ENCODE measurements at regions of chr1 and their contacts with region 1.

Region 1: GRCh38 chr1:210448297-210448892 is 119.7 kb downstream of the HHAT start:
- DNase-seq: peak; percentile 49
- ATAC-seq: no peak
- H3K4me3 Mint-ChIP-seq: no peak overlapping the region
- H3K27ac Mint-ChIP-seq: no peak overlapping the region
- H3K4me1 Mint-ChIP-seq: peaks cover 28% of the 10 kb centered on the region
- H3K27me3 Mint-ChIP-seq: peaks cover 2% of the 10 kb centered on the region

Region 2: GRCh38 chr1:210200124-210200736 is 248.2 kb before region 1 on chr1:
- CTCF ChIA-PET with region 1: no interaction called
- POLR2A ChIA-PET with region 1: no interaction called
- intact Hi-C with region 1: no loop called
- DNase-seq: no peak
- ATAC-seq: no peak
- H3K4me3 Mint-ChIP-seq: no peak overlapping the region
- H3K27ac Mint-ChIP-seq: no peak overlapping the region
- H3K4me1 Mint-ChIP-seq: no peaks in the 10 kb centered on the region
- H3K27me3 Mint-ChIP-seq: peaks cover 7% of the 10 kb centered on the region

Region 3: DNA sequence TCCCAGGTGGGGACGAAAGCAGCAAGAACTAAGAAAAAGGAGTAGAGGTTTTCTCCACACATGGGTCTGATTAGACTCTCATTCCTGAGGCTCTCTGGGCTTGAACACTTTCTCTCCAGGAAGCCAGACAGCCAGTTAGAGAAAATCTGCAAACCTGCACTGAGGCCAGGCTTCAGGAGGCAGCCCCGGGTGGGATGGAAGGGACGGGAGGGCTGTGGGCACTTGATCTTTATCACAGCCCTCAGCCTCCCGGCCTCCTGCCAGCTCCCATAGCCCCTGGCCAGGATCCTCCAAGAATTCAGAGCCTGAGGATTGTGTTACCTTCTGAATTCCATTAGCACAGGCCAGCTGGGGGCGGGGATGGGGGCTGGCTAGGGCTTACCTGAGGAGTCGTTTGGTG is 175.7 kb before region 1 on chr1:
- CTCF ChIA-PET with region 1: no interaction called
- POLR2A ChIA-PET with region 1: no interaction called
- intact Hi-C with region 1: no loop called
- DNase-seq: no peak
- ATAC-seq: no peak
- H3K4me3 Mint-ChIP-seq: no peak overlapping the region
- H3K27ac Mint-ChIP-seq: no peak overlapping the region
- H3K4me1 Mint-ChIP-seq: no peaks in the 10 kb centered on the region
- H3K27me3 Mint-ChIP-seq: peaks cover 15% of the 10 kb centered on the region

Region 4: DNA sequence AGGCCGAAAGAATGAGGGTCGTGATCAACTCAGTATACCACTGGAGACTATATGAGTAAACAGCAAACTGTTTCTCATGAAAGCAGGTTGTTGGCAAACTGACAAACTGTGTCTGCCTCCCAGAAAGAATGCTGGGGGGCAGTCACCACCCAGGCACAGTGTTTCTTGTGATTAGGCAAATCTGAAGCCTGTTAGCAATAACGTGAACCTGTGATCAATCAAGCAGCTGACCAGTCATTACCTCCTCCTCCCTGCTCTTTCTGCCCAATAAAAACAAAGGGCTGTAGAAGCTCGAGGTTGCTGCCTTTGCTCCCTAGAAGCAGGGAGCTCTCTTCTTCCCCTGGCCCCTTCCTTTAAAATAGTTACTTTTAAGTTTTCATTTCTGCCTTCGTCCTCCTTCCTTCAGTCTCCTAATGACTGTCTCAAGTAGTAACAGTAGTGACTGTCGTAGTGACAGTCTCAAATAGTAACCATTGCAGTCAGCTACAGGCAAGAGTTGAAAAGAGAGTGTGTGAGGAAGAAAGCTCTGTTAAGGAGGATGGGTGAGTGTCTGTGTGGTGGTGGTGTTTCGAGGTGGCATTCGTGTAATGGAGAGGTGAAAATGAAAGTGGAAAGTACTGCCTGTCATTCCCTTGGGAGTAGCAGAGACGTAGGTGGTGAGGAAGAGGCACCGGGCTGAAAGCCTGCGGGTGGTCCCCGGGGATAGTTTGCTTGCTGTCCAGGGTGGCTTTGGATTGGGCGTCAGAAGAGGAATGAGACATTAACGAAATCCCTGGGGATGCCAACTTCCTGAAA is 105.2 kb before region 1 on chr1:
- CTCF ChIA-PET with region 1: interaction called, 3 read pairs
- POLR2A ChIA-PET with region 1: no interaction called
- intact Hi-C with region 1: loop called in 1 of 2 experiments (anchors 1 kb)
- DNase-seq: no peak
- ATAC-seq: peak; percentile 50
- H3K4me3 Mint-ChIP-seq: no peak overlapping the region
- H3K27ac Mint-ChIP-seq: no peak overlapping the region
- H3K4me1 Mint-ChIP-seq: peaks cover 37% of the 10 kb centered on the region
- H3K27me3 Mint-ChIP-seq: no peaks in the 10 kb centered on the region

Region 5: DNA sequence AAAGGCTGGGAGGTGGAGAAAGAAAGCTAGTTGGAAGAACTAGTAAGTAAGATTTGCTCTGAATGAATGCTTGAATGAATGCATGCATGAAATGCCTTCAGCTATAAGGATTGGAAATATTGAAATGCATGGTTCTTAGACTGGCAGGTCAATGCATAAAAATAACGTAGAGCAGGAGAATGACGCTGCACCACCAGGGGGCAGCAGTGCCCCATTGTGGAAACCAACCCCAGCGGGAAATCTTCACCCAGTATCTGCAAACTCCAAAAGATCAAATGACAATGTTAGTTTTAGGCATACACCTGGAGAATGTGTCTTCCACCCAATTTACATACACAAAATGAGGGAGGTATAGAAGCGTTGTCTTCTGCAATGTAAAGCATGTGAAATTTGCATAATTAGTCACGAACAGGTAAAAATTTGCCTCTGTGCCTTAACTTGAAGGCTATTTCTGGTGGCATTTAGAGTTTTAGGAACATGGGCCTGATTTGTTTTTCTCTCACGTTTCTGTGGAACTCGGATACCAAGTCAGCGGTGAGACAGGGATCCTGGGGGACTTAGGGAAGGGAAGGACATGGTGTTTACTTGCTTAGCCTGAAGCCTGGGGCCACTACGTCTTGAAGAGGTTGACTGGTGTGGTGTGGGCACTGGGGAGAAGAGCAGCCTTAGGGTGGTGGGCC is 41.0 kb before region 1 on chr1:
- CTCF ChIA-PET with region 1: interaction called, 28 read pairs
- POLR2A ChIA-PET with region 1: no interaction called
- intact Hi-C with region 1: loop called (anchors 1 kb)
- DNase-seq: peak; percentile 88
- ATAC-seq: peak; percentile 83
- H3K4me3 Mint-ChIP-seq: no peak overlapping the region
- H3K27ac Mint-ChIP-seq: no peak overlapping the region
- H3K4me1 Mint-ChIP-seq: peaks cover 4% of the 10 kb centered on the region
- H3K27me3 Mint-ChIP-seq: no peaks in the 10 kb centered on the region

Region 6: DNA sequence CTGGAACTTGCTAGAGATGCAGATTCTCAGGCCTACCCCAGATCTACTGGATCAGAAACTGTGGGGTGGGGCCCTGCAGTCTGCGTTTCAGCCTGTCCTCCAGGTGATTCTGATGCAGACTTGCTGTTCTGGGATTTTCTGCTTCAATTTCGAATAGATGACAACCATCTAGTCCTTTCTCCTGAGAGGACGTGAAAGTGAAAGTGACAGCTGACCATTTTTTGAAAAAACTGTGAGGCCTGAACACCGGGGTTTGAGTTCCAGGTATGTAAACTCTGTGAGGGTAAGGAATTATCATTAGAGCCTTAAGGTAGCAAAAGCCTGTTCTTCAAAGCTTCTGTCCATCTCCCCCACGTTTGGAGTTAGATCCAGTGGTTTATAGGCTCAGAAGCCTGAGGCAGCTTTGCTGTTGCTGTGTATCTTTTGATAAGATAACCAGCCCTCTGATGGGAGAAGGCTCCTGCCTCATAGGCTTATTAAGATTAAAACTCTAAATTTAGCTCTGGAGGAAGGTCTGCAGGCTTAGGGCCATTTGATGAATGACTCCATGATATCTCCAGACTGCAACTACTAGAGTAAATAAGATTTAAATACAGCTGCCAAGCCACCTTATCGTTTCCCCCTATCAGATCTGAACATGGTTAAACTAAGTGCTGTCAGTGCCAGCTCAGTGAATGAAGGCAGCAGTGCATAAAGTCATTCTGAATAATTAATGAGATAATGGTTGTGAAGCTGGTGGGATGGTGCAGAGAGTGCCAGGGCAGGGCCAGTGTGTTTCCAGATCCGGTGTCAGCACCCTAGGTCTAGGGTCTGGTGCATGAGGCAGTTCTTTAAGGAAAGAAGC is 215.6 kb after region 1 on chr1:
- CTCF ChIA-PET with region 1: no interaction called
- POLR2A ChIA-PET with region 1: no interaction called
- intact Hi-C with region 1: no loop called
- DNase-seq: no peak
- ATAC-seq: no peak
- H3K4me3 Mint-ChIP-seq: no peak overlapping the region
- H3K27ac Mint-ChIP-seq: no peak overlapping the region
- H3K4me1 Mint-ChIP-seq: no peaks in the 10 kb centered on the region
- H3K27me3 Mint-ChIP-seq: no peaks in the 10 kb centered on the region

Region 7: GRCh38 chr1:210815641-210816550 is 367.5 kb after region 1 on chr1:
- CTCF ChIA-PET with region 1: no interaction called
- POLR2A ChIA-PET with region 1: no interaction called
- intact Hi-C with region 1: loop called in 1 of 2 experiments (anchors 5 kb)
- DNase-seq: no peak
- ATAC-seq: no peak
- H3K4me3 Mint-ChIP-seq: no peak overlapping the region
- H3K27ac Mint-ChIP-seq: no peak overlapping the region
- H3K4me1 Mint-ChIP-seq: no peaks in the 10 kb centered on the region
- H3K27me3 Mint-ChIP-seq: peaks cover 6% of the 10 kb centered on the region

Region 8: DNA sequence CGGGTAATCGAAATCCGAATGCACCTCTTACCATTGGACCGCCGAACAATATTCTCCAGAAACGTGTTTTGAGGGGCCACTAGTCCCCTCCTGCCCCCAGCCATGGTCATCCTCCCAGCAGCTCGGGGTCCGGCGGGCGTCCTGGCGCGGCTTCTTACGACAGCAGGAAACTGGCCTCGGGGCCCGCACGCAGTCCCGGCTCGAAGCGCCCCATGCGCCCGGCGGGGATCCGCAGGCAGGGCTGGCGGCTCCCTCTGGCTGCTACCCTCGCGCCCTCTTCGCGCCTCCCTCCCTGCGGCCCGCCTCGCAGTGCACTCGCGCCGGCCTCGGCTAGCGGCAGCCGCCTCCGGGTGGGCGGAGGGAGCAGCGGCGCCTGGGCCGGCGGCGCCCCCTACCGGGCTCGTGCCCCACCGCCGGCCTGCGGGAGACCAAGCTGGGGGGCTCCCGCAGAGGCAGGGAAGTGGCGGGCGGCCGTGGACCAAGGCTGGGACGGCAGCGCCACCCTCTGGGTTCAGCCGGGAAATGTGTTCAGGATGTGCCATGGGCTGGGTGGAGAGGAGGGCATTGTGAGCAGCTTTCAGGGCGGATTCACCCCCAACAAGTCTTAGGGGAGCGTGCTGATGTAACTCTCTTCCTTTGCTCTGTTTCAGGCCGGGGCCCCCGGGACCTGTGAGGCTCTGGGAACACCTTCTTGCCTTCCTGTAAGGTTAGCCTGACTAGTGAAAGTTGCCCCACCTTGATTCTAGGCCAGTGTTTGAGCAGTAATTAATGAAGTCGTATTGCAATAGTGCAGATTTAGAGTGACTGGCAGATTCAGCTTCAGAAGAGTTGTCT is 685.7 kb after region 1 on chr1 and contains the start of gene KCNH1:
- CTCF ChIA-PET with region 1: interaction called, 44 read pairs
- POLR2A ChIA-PET with region 1: no interaction called
- intact Hi-C with region 1: loop called (anchors 1 kb)
- DNase-seq: peak; percentile 91
- ATAC-seq: peak; percentile 92
- H3K4me3 Mint-ChIP-seq: peak within 1 kb of the TSS; percentile 54
- H3K27ac Mint-ChIP-seq: peak within 1 kb of the TSS; percentile 26
- H3K4me1 Mint-ChIP-seq: peaks cover 13% of the 10 kb centered on the region
- H3K27me3 Mint-ChIP-seq: peaks cover 41% of the 10 kb centered on the region
- total RNA-seq, gene KCNH1: not detected

Region 9: GRCh38 chr1:211382714-211383480 is 934.5 kb after region 1 on chr1:
- CTCF ChIA-PET with region 1: no interaction called
- POLR2A ChIA-PET with region 1: no interaction called
- intact Hi-C with region 1: loop called in 1 of 2 experiments (anchors 2 kb)
- DNase-seq: peak; percentile 86
- ATAC-seq: peak; percentile 72
- H3K4me3 Mint-ChIP-seq: peak overlapping the region; percentile 88
- H3K27ac Mint-ChIP-seq: peak overlapping the region; percentile 98
- H3K4me1 Mint-ChIP-seq: peaks cover 47% of the 10 kb centered on the region
- H3K27me3 Mint-ChIP-seq: no peaks in the 10 kb centered on the region

Region 10: GRCh38 chr1:211654838-211655787 is 1206.7 kb after region 1 on chr1:
- CTCF ChIA-PET with region 1: no interaction called
- POLR2A ChIA-PET with region 1: no interaction called
- intact Hi-C with region 1: loop called in 1 of 2 experiments (anchors 1 kb)
- DNase-seq: peak; percentile 91
- ATAC-seq: peak; percentile 100
- H3K4me3 Mint-ChIP-seq: no peak overlapping the region
- H3K27ac Mint-ChIP-seq: no peak overlapping the region
- H3K4me1 Mint-ChIP-seq: no peaks in the 10 kb centered on the region
- H3K27me3 Mint-ChIP-seq: peaks cover 1% of the 10 kb centered on the region

Measured in activated CD4-positive, alpha-beta T cell treated with anti-CD3 and anti-CD28 coated beads for 36 hours (primary cell).